ENCODE measurements at regions of chr17 and their contacts with region 1.

Region 1: GRCh38 chr17:72863526-72864211 is 228.8 kb downstream of the SLC39A11 start:
- DNase-seq: no peak
- H3K4me3 ChIP-seq: no peak overlapping the region
- CTCF ChIP-seq: no peak
- POLR2A ChIP-seq: no peak

Region 2: DNA sequence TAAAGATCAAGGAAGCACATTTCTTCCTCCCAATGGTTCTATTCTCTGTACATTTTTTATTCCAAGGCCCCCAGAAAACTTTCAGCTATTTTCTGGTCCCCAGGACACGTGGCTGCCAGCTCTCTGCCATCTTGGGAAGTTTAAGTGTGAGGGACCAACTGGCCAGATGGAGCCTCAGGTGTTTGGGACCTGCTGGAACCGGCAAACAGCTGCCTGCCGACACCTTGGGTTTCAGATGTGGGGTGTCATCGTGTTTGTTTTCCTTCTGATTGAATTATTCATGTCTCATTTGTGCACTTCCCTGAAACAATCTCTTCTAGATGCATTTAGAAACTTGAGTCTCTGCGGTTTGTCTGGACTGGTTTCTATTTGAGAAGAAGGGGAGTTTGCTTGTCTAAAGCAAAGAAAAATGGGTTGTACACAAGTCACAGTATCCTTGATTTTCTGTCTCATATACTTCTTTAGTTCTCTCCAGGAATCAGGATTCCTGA is 157.7 kb before region 1 on chr17:
- intact Hi-C with region 1: no loop called
- DNase-seq: no peak
- H3K4me3 ChIP-seq: no peak overlapping the region
- CTCF ChIP-seq: no peak
- POLR2A ChIP-seq: no peak

Region 3: GRCh38 chr17:72916991-72917390 is 53.3 kb after region 1 on chr17:
- intact Hi-C with region 1: loop called (anchors 2 kb)
- DNase-seq: no peak
- H3K4me3 ChIP-seq: no peak overlapping the region
- CTCF ChIP-seq: no peak
- POLR2A ChIP-seq: no peak

Measured in lower leg skin (tissue), 4 donors.